HEK293 (cell line): ENCODE measurements at regions of chr20 and their contacts with region 1.

Region 1: DNA sequence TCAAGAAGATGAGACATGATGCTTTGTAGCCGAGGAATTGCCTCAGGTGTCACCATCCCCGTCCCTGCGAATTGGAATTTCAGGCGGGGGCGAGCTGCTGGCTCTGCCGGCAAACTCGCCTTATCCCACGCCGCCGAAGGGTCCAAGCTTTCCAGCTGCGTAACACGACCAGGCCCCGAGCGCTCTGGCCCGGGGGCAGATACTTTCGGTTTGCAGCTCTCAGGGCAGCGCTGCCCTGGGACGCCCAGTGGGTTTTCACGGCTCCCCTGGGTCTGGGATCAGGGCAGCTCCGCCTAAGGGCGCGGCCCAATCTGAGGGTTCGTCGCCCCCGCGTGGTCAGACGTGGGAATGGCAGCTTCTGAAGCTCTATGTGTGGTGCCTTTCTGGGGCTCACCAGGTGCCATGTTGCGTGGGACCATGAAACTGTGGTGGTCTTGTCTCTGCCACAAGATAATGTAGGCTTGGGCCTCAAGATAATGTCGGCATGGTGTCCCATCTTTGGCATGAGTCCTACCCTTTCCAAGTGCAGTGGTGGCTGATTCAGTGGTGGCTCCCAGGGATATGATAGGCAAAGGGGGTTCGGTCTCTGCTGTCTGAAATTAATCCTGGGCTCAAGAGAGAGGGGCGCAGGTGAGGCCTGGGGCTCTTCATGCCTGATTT is 20.9 kb downstream of the PIGT start:
- H3K4me3 ChIP-seq: peak overlapping the region; percentile 59
- H3K27ac ChIP-seq: no peak overlapping the region
- H3K4me1 ChIP-seq: 0 out of 2 replicates have a peak, but pooled peaks cover 4% of the 10 kb centered on the region
- CTCF ChIP-seq: peak; percentile 97

Region 2: DNA sequence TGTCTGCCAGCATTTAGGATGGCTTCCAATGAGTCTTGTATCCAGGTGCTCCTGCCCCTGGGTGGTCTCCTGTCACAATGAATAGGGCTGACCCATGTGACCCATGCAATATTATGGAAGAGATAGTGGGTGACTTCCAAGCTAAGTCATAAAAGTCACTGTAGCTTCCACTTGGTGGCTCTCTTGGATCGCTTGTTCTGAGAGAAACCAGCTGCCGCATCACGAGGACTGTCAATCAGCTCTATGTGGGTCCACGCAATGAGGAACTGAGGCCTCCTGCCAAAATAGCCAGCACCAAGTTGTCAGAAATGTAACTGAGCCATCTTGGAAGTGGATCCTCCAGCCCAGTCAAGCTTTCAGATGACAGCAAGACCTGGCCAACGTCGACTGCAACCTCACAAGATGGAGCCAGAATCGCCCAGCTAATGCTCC is 113.9 kb before region 1 on chr20:
- CTCF ChIA-PET with region 1: interaction called, 31 read pairs
- POLR2A ChIA-PET with region 1: interaction called, 7 read pairs
- H3K4me3 ChIP-seq: no peak overlapping the region
- H3K27ac ChIP-seq: no peak overlapping the region
- H3K4me1 ChIP-seq: no peaks in the 10 kb centered on the region; the same call in 1 of the 2 replicates
- CTCF ChIP-seq: peak; percentile 35; the same call in 1 of the 2 replicates

Region 3: DNA sequence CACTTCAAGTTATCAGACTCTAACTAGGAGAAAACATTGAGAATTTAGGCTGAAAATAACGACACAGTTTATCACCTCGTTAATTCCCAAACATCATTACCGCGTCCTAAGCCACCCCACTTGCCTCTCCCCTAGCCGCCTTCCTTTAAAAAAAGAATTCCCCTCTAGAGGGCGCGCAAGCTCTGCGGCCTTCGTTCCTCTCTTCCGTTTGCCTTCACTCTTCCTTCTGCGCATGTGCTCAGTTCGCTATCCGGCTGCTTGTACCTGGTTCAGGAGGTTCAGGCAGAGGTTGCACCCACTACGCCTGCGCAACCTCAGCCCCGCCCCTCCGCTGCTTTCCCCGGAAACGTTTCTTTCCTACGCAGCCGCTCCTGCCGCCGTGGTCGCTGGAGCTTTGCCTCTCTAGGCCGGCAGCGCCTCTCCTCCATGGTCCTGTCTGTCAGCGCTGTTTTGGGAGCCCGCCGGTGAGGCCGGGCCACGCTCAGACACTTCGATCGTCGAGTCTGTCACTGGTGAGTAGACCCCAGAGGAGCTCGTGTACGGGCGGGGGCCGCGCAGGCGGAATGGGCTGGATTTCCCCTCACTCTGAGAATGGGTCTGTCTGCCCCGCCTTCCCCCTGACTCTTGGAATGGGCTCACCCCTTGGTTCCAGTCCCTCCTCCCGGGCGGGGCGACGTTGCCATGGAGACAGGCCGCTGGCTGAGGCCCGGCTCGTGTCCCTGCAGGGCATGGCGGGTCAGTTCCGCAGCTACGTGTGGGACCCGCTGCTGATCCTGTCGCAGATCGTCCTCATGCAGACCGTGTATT is 73.9 kb before region 1 on chr20 and contains the start of gene SYS1:
- CTCF ChIA-PET with region 1: interaction called, 92 read pairs
- POLR2A ChIA-PET with region 1: interaction called, 9 read pairs
- H3K4me3 ChIP-seq: peak within 1 kb of the TSS; percentile 66
- H3K27ac ChIP-seq: peak within 1 kb of the TSS; percentile 31; the same call in 1 of the 2 replicates
- H3K4me1 ChIP-seq: no peaks in the 10 kb centered on the region; the same call in 1 of the 2 replicates
- CTCF ChIP-seq: peak; percentile 100

Region 4: DNA sequence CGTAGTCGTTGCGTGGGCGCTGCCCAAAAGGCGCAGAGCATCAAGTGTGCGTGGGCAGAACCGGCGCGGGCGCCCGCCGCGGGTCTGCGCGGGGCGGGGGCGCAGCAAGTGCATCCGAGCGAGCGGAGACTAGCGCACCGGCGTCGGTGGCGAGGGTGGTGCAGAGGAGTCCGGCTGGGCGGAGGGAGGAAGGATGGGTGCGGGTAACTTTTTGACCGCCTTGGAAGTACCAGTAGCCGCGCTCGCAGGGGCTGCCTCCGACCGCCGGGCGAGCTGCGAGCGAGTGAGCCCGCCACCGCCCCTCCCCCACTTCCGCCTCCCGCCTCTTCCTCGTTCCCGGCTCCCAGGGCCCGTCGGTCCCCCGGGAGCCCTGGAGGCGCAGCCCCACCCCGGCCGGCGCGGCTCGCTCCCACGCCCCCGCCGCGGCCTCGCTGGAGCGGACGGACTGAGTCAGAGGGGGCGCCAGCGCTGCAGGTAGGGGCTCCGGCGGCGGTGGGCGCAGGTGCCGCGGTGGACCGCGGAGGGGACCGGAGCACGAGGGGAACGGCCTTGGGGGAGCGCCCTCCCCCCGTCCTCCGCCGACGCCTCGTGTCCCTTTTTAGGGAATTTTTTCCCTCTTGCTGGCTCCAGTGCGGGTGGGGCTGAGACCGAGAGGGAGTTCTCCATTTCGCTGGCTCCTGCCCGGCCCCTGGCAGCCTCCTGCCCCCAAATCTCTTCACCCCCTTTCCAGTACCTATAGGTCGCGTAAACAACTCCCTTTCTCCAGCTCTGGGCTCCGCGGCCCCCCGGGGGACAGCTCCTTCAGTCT is 30.4 kb before region 1 on chr20:
- CTCF ChIA-PET with region 1: interaction called, 11 read pairs
- POLR2A ChIA-PET with region 1: interaction called, 11 read pairs
- H3K4me3 ChIP-seq: peak overlapping the region; percentile 71
- H3K27ac ChIP-seq: peak overlapping the region; percentile 92
- H3K4me1 ChIP-seq: peaks cover 10% of the 10 kb centered on the region
- CTCF ChIP-seq: peak; percentile 30; the same call in 1 of the 2 replicates

Region 5: GRCh38 chr20:45450097-45450818 is 13.4 kb after region 1 on chr20:
- CTCF ChIA-PET with region 1: interaction called, 90 read pairs
- POLR2A ChIA-PET with region 1: no interaction called
- H3K4me3 ChIP-seq: no peak overlapping the region
- H3K27ac ChIP-seq: no peak overlapping the region
- H3K4me1 ChIP-seq: no peaks in the 10 kb centered on the region
- CTCF ChIP-seq: peak; percentile 24; the same call in 1 of the 2 replicates